ENCODE measurements at regions of chrX and their contacts with region 1.

Region 1: GRCh38 chrX:72540318-72540717 is 32.3 kb downstream of the HDAC8 start:
- DNase-seq: no peak
- ATAC-seq: no peak
- H3K4me3 Mint-ChIP-seq: no peak overlapping the region
- H3K27ac Mint-ChIP-seq: no peak overlapping the region
- H3K4me1 Mint-ChIP-seq: peaks cover 6% of the 10 kb centered on the region
- H3K27me3 Mint-ChIP-seq: no peaks in the 10 kb centered on the region

Region 2: GRCh38 chrX:72216973-72217372 is 323.3 kb before region 1 on chrX:
- CTCF ChIA-PET with region 1: no interaction called
- POLR2A ChIA-PET with region 1: no interaction called
- intact Hi-C with region 1: no loop called
- DNase-seq: no peak
- ATAC-seq: no peak
- H3K4me3 Mint-ChIP-seq: no peak overlapping the region
- H3K27ac Mint-ChIP-seq: no peak overlapping the region
- H3K4me1 Mint-ChIP-seq: no peaks in the 10 kb centered on the region
- H3K27me3 Mint-ChIP-seq: no peaks in the 10 kb centered on the region

Region 3: GRCh38 chrX:72245461-72246089 is 294.7 kb before region 1 on chrX:
- CTCF ChIA-PET with region 1: no interaction called
- POLR2A ChIA-PET with region 1: no interaction called
- intact Hi-C with region 1: loop called in 1 of 2 experiments (anchors 2 kb)
- DNase-seq: peak; percentile 61
- ATAC-seq: peak; percentile 63
- H3K4me3 Mint-ChIP-seq: no peak overlapping the region
- H3K27ac Mint-ChIP-seq: no peak overlapping the region
- H3K4me1 Mint-ChIP-seq: peaks cover 9% of the 10 kb centered on the region
- H3K27me3 Mint-ChIP-seq: no peaks in the 10 kb centered on the region

Region 4: GRCh38 chrX:72297953-72298730 is 242.2 kb before region 1 on chrX:
- CTCF ChIA-PET with region 1: interaction called, 3 read pairs
- POLR2A ChIA-PET with region 1: no interaction called
- intact Hi-C with region 1: loop called (anchors 2 to 10 kb)
- DNase-seq: peak; percentile 40
- ATAC-seq: peak; percentile 75
- H3K4me3 Mint-ChIP-seq: no peak overlapping the region
- H3K27ac Mint-ChIP-seq: no peak overlapping the region
- H3K4me1 Mint-ChIP-seq: no peaks in the 10 kb centered on the region
- H3K27me3 Mint-ChIP-seq: peaks cover 34% of the 10 kb centered on the region

Region 5: DNA sequence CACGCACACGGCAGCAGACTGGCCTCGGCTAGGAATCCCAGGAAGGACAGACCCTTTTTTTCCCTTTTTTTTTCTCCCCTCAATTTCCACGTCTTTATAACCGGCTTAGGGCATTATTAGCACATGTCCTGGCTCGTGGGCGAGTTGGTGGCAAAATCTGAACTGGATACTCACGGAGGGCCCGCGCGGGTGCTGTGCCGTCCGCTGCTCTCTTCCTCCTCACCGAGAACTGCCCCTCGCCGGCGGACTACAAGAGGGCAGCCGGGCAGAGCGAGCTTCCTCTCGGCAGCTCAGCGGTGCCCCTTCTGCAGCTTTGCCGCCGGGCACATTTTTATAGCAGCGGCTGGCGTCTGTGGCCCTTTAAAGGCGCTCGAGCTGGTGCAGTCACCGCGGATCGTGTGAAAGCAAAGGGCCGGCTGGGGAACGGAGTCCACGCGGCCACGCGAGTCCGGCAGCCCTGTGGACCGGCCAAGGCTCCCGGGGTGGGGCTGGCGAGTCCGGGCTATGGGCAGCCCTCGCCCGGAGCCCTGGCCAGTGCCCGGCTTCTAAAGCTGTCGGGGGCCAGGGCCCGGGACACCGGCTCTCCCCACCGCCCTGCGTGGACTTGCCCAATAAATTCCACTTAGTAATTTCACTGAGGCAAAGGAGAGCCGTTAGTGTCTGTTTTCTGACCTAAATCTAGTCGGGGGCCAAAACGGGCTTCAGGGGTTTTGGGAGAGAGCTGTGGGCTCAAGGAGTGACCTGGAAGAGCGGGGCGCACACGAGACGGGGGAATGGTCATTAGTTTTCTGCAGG is 233.3 kb before region 1 on chrX:
- CTCF ChIA-PET with region 1: no interaction called
- POLR2A ChIA-PET with region 1: no interaction called
- intact Hi-C with region 1: loop called in 1 of 2 experiments (anchors 10 kb)
- DNase-seq: peak; percentile 50
- ATAC-seq: peak; percentile 40
- H3K4me3 Mint-ChIP-seq: peak overlapping the region; percentile 69
- H3K27ac Mint-ChIP-seq: no peak overlapping the region
- H3K4me1 Mint-ChIP-seq: peaks cover 24% of the 10 kb centered on the region
- H3K27me3 Mint-ChIP-seq: peaks cover 47% of the 10 kb centered on the region

Region 6: GRCh38 chrX:72620550-72621145 is 80.3 kb after region 1 on chrX:
- CTCF ChIA-PET with region 1: no interaction called
- POLR2A ChIA-PET with region 1: no interaction called
- intact Hi-C with region 1: no loop called
- DNase-seq: peak; percentile 70
- ATAC-seq: peak; percentile 63
- H3K4me3 Mint-ChIP-seq: peak overlapping the region; percentile 32
- H3K27ac Mint-ChIP-seq: peak overlapping the region; percentile 93
- H3K4me1 Mint-ChIP-seq: peaks cover 22% of the 10 kb centered on the region
- H3K27me3 Mint-ChIP-seq: no peaks in the 10 kb centered on the region